ENCODE measurements at regions of chr11 and their contacts with region 1.

Region 1: GRCh38 chr11:48109046-48109666 is 107.5 kb upstream of the OR4B1 start:
- DNase-seq: no peak
- ATAC-seq: peak; percentile 10; the same call in 2 of the 3 replicates
- H3K4me3 ChIP-seq: peak overlapping the region; percentile 37; the same call in 1 of the 2 replicates
- H3K27ac ChIP-seq: peak overlapping the region; percentile 57
- H3K4me1 ChIP-seq: peaks cover 45% of the 10 kb centered on the region
- H3K27me3 ChIP-seq: no peaks in the 10 kb centered on the region
- CTCF ChIP-seq: peak; percentile 14 to 45 (median 43); a peak in 5 of 6 replicates
- EP300 ChIP-seq: no peak
- POLR2A ChIP-seq: no peak
- RAD21 ChIP-seq: peak; percentile 73

Region 2: GRCh38 chr11:47847892-47848635 is 261.1 kb before region 1 on chr11 and contains the start of gene NUP160:
- CTCF ChIA-PET with region 1: interaction called, 4 read pairs
- POLR2A ChIA-PET with region 1: no interaction called
- RAD21 ChIA-PET with region 1: interaction called, 25 read pairs
- SMC1A ChIA-PET with region 1: interaction called, 26 read pairs
- in situ Hi-C with region 1: loop called (anchors 5 kb)
- intact Hi-C with region 1: loop called (anchors 1 kb)
- DNase-seq: no peak
- ATAC-seq: peak; percentile 90
- H3K4me3 ChIP-seq: peak within 1 kb of the TSS; percentile 98
- H3K27ac ChIP-seq: peak within 1 kb of the TSS; percentile 84
- H3K4me1 ChIP-seq: peaks cover 33% of the 10 kb centered on the region
- H3K27me3 ChIP-seq: no peaks in the 10 kb centered on the region
- CTCF ChIP-seq: no peak
- EP300 ChIP-seq: 0 out of 4 replicates have a peak, but pooled peaks of 1 of the 2 experiments have one; percentile 29
- POLR2A ChIP-seq: peak; percentile 100
- RAD21 ChIP-seq: no peak
- polyA plus RNA-seq, gene NUP160: 24.0 to 32.9 TPM

Region 3: GRCh38 chr11:47863189-47863892 is 245.8 kb before region 1 on chr11:
- CTCF ChIA-PET with region 1: interaction called, 4 read pairs
- POLR2A ChIA-PET with region 1: no interaction called
- RAD21 ChIA-PET with region 1: no interaction called
- SMC1A ChIA-PET with region 1: interaction called, 12 read pairs
- in situ Hi-C with region 1: no loop called
- intact Hi-C with region 1: no loop called
- DNase-seq: no peak
- ATAC-seq: peak; percentile 84
- H3K4me3 ChIP-seq: peak overlapping the region; percentile 27; the same call in 1 of the 2 replicates
- H3K27ac ChIP-seq: peak overlapping the region; percentile 67
- H3K4me1 ChIP-seq: peaks cover 46% of the 10 kb centered on the region
- H3K27me3 ChIP-seq: no peaks in the 10 kb centered on the region
- CTCF ChIP-seq: no peak
- EP300 ChIP-seq: no peak
- POLR2A ChIP-seq: no peak
- RAD21 ChIP-seq: no peak

Region 4: DNA sequence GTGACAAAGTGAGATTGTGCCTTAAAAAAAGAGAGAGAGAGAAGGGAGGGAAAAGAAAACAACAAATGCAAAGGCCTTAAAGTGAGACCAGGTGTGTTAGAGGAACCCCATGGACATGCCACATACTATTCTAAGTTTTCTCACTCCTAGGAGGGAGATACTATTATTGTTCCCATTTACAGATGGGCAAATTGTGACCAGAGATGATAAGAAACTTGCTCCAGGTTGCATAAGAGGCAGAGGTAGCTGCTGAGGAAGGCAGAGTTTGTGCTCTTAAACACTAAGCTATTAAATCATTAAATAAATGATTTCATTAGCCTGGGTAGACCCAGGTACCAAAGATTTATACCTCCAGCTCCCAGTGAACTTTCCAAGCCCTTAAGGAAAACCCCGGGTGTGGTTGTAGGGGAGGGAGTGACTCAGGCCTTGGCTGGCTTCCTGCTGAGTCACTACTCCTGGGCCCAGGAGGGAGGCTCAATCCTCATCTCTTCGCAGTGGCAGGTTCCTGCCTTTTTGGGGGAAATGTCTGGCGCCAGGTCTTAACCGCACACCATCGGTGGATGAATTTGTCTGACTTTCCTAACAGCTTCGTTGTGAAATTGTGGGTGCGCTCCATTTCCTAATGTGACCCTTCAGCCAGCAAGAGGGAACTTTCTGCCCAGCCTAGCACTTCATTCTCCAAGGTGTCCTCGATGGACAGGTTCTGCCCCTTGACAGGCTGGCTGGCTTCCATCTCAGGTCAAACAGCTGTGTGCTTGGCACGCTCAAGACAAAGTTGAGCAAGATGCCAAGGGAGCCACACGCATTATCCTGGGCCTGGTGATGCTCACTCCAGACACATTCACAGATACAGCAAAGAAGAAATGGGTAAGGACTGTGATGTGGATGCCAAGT is 162.2 kb before region 1 on chr11:
- CTCF ChIA-PET with region 1: interaction called, 244 read pairs
- POLR2A ChIA-PET with region 1: interaction called, 4 read pairs
- RAD21 ChIA-PET with region 1: interaction called, 5 read pairs
- SMC1A ChIA-PET with region 1: interaction called, 6 read pairs
- in situ Hi-C with region 1: no loop called
- intact Hi-C with region 1: no loop called
- DNase-seq: no peak
- ATAC-seq: peak; percentile 37; the same call in 1 of the 3 replicates
- H3K4me3 ChIP-seq: no peak overlapping the region
- H3K27ac ChIP-seq: no peak overlapping the region
- H3K4me1 ChIP-seq: peaks cover 8% of the 10 kb centered on the region; the same call in 1 of the 2 replicates
- H3K27me3 ChIP-seq: no peaks in the 10 kb centered on the region
- CTCF ChIP-seq: no peak
- EP300 ChIP-seq: no peak
- POLR2A ChIP-seq: no peak
- RAD21 ChIP-seq: no peak

Region 5: GRCh38 chr11:47980245-47981049 is 128.7 kb before region 1 on chr11 and contains the start of gene PTPRJ:
- CTCF ChIA-PET with region 1: interaction called, 17 read pairs
- POLR2A ChIA-PET with region 1: no interaction called
- RAD21 ChIA-PET with region 1: interaction called, 6 read pairs
- SMC1A ChIA-PET with region 1: interaction called, 19 read pairs
- in situ Hi-C with region 1: no loop called
- intact Hi-C with region 1: loop called (anchors 5 kb)
- DNase-seq: no peak
- ATAC-seq: peak; percentile 75
- H3K4me3 ChIP-seq: peak within 1 kb of the TSS; percentile 96
- H3K27ac ChIP-seq: peak within 1 kb of the TSS; percentile 68
- H3K4me1 ChIP-seq: peaks cover 14% of the 10 kb centered on the region
- H3K27me3 ChIP-seq: peaks cover 0 to 3% of the 10 kb centered on the region in 2 experiments; a peak in 2 of 4 replicates
- CTCF ChIP-seq: no peak
- EP300 ChIP-seq: no peak
- POLR2A ChIP-seq: no peak; the same call in 1 of the 2 replicates
- RAD21 ChIP-seq: no peak
- polyA plus RNA-seq, gene PTPRJ: 0.77 to 0.91 TPM

Region 6: DNA sequence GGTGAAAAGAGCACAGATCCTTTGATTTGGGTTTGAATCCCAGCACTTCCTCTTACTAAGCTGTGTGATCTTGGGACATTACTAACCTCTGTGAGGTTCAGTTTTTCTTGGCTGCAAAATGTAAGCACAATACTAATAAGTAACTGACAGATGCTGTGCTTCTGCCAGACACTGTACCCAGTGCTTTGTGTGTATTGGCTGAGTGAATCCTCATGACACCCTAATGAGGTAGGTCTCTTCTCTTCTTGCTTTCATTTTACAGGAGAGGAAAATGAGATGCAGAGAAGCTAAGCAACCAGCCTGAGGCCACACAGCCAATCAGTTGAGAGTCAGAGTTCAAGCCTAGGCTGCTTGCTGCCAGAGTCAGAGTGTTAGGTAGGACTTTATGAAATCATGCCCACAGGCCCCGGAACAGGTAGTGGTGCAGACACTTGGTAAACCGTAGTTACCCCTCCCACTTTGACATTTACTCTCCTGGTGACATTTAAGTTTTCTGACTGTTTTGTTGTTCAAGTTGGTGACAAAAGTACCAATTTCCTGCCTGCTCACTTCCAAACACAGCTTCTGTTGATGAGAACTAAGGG is 107.6 kb before region 1 on chr11:
- CTCF ChIA-PET with region 1: interaction called, 5 read pairs
- POLR2A ChIA-PET with region 1: interaction called, 8 read pairs
- RAD21 ChIA-PET with region 1: interaction called, 6 read pairs
- SMC1A ChIA-PET with region 1: interaction called, 10 read pairs
- in situ Hi-C with region 1: no loop called
- intact Hi-C with region 1: loop called (anchors 5 kb)
- DNase-seq: no peak
- ATAC-seq: peak; percentile 82
- H3K4me3 ChIP-seq: peak overlapping the region; percentile 37; the same call in 1 of the 2 replicates
- H3K27ac ChIP-seq: peak overlapping the region; percentile 73
- H3K4me1 ChIP-seq: peaks cover 72% of the 10 kb centered on the region
- H3K27me3 ChIP-seq: no peaks in the 10 kb centered on the region
- CTCF ChIP-seq: no peak
- EP300 ChIP-seq: no peak
- POLR2A ChIP-seq: 0 out of 2 replicates have a peak, but pooled peaks have one; percentile 17
- RAD21 ChIP-seq: no peak

Region 7: GRCh38 chr11:48020092-48020755 is 88.9 kb before region 1 on chr11:
- CTCF ChIA-PET with region 1: interaction called, 14 read pairs
- POLR2A ChIA-PET with region 1: no interaction called
- RAD21 ChIA-PET with region 1: interaction called, 19 read pairs
- SMC1A ChIA-PET with region 1: interaction called, 12 read pairs
- in situ Hi-C with region 1: no loop called
- intact Hi-C with region 1: no loop called
- DNase-seq: peak; percentile 66
- ATAC-seq: peak; percentile 91
- H3K4me3 ChIP-seq: peak overlapping the region; percentile 42
- H3K27ac ChIP-seq: peak overlapping the region; percentile 88
- H3K4me1 ChIP-seq: peaks cover 66% of the 10 kb centered on the region
- H3K27me3 ChIP-seq: no peaks in the 10 kb centered on the region
- CTCF ChIP-seq: peak in 2 of 3 experiments; percentile 28 to 38; a peak in 3 of 6 replicates
- EP300 ChIP-seq: no peak
- POLR2A ChIP-seq: 0 out of 2 replicates have a peak, but pooled peaks have one; percentile 37
- RAD21 ChIP-seq: peak; percentile 65